PC-9 (cell line): ENCODE measurements at regions of chr6 and their contacts with region 1.

Region 1: DNA sequence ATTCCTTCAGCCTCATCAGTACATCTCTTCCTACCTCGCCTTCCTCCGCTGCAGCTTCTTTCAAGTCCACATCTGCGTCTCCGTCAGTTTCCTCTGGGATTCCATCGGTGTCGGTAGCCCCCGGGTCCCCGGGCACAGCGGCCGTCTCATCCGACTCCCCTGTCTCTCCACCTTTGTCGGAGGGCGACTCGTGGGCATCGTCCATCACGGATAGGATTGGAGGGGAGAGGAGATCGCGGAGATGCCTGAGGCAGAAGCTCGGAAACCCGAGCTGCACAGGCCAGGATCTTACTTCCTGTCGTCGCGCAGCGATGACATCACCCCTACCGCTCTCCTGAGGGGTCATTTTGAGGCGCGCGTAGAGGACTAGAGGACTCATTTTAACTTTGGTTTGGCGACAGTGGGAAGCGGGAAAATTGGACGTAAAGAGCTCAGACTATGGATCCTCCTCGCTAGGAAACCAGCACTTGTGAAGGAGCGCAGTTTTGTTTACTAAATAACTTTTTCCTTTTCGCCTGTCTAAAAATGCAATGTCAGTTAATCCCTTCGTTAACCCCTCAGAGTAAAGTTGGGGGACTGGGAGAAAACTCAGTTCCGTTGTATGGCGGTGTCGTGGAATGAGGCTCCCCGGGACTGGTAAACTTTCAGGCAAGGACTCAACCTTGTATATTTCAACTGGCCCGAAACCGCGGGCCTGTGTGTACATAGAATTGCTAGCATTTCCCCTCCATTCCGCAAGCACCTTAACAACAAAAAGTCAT is at the start of gene TAF11:
- DNase-seq: peak; percentile 87 to 90
- H3K4me3 ChIP-seq: peak within 1 kb of the TSS; percentile 91
- H3K27ac ChIP-seq: peak within 1 kb of the TSS; percentile 57
- H3K4me1 ChIP-seq: peaks cover 21% of the 10 kb centered on the region
- H3K27me3 ChIP-seq: no peaks in the 10 kb centered on the region
- CTCF ChIP-seq: no peak
- total RNA-seq, gene TAF11: 26.7 and 27.2 TPM in 2 replicates

Region 2: GRCh38 chr6:34745277-34746103 is 142.4 kb before region 1 on chr6:
- CTCF ChIA-PET with region 1: interaction called, 11 read pairs
- POLR2A ChIA-PET with region 1: no interaction called
- intact Hi-C with region 1: no loop called
- DNase-seq: peak; percentile 72 to 93
- H3K4me3 ChIP-seq: peak overlapping the region; percentile 32; the same call in 1 of the 2 replicates
- H3K27ac ChIP-seq: peak overlapping the region; percentile 80
- H3K4me1 ChIP-seq: peaks cover 35% of the 10 kb centered on the region
- H3K27me3 ChIP-seq: no peaks in the 10 kb centered on the region
- CTCF ChIP-seq: no peak

Region 3: DNA sequence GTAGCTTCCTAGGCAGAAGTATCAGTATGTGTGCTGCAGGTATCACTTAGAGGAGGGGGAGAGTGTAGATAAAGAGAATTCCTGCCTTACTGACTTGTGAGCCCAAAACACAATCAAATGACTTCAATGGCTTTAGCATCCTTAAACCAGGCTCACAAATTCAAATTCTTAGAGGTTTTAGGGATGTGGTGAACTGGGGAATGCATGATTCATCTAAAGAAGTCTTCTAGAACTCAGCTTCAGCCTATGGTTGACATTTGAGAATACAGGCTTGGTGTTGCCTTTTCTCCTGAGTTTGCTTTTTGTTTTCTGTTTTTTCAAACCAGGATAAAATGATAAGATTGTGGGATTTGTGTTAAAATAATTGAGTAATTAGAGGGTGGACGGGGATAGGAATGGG is 116.2 kb before region 1 on chr6:
- CTCF ChIA-PET with region 1: no interaction called
- POLR2A ChIA-PET with region 1: interaction called, 10 read pairs
- intact Hi-C with region 1: no loop called
- DNase-seq: no peak
- H3K4me3 ChIP-seq: no peak overlapping the region
- H3K27ac ChIP-seq: no peak overlapping the region
- H3K4me1 ChIP-seq: no peaks in the 10 kb centered on the region
- H3K27me3 ChIP-seq: no peaks in the 10 kb centered on the region
- CTCF ChIP-seq: no peak

Region 4: GRCh38 chr6:34791701-34792235 is 96.2 kb before region 1 on chr6 and contains the start of gene BLTP3A:
- CTCF ChIA-PET with region 1: no interaction called
- POLR2A ChIA-PET with region 1: interaction called, 5 read pairs
- intact Hi-C with region 1: loop called (anchors 1 kb)
- DNase-seq: peak in 1 of 2 experiments; percentile 62
- H3K4me3 ChIP-seq: peak within 1 kb of the TSS; percentile 99
- H3K27ac ChIP-seq: peak within 1 kb of the TSS; percentile 90
- H3K4me1 ChIP-seq: peaks cover 46% of the 10 kb centered on the region
- H3K27me3 ChIP-seq: no peaks in the 10 kb centered on the region
- CTCF ChIP-seq: 0 out of 2 replicates have a peak, but pooled peaks have one; percentile 6
- total RNA-seq, gene BLTP3A: 18.2 and 22.3 TPM in 2 replicates